ENCODE measurements at regions of chr18 and their contacts with region 1.

Region 1: DNA sequence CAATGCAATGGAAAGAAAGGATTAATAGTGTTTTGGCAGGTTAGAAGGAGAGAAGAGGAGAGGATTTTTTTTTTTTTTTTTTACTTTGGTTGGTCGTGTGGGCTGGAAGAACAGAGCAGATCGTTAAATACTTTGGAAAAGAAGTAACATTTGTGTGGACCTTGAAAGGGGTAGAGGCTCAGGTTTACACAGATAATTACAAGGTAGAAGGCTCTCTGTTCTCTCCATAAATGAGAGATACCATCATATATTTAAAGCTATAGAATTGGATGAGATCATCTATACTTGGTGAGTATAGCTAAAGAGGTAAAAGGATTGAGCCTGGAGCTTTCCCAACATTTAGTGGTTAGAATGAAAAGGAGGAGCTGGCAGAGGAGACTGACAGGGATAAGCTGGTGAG is 49.0 kb downstream of the SMCHD1 start:
- DNase-seq: no peak
- ATAC-seq: no peak
- H3K4me3 ChIP-seq: no peak overlapping the region
- H3K27ac ChIP-seq: no peak overlapping the region
- H3K4me1 ChIP-seq: no peaks in the 10 kb centered on the region
- H3K27me3 ChIP-seq: no peaks in the 10 kb centered on the region
- CTCF ChIP-seq: no peak

Region 2: DNA sequence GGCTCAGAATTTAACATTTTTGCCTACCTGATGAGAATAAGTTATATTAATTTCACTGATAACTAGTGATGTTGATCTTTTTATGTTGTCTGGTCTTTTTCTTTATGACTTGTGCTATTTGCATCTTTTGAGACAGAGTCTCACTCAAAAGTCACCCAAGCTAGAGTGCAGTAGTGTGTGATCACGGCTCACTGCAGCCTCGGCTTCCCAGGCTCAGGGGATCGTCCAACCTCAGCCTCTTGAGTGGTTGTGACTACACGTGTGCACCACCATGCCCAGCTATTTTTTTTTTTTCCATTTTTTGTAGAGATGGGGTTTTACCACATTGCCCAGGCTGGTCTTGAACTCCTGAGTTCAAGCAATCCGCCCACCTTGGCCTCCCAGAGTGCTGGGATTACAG is 41.6 kb before region 1 on chr18:
- CTCF ChIA-PET with region 1: no interaction called
- POLR2A ChIA-PET with region 1: no interaction called
- intact Hi-C with region 1: loop called (anchors 5 kb)
- DNase-seq: no peak
- ATAC-seq: no peak
- H3K4me3 ChIP-seq: no peak overlapping the region
- H3K27ac ChIP-seq: no peak overlapping the region
- H3K4me1 ChIP-seq: peaks cover 13% of the 10 kb centered on the region
- H3K27me3 ChIP-seq: no peaks in the 10 kb centered on the region
- CTCF ChIP-seq: no peak